Caco-2 (cell line): ENCODE measurements at regions of chr13 and their contacts with region 1.

Region 1: DNA sequence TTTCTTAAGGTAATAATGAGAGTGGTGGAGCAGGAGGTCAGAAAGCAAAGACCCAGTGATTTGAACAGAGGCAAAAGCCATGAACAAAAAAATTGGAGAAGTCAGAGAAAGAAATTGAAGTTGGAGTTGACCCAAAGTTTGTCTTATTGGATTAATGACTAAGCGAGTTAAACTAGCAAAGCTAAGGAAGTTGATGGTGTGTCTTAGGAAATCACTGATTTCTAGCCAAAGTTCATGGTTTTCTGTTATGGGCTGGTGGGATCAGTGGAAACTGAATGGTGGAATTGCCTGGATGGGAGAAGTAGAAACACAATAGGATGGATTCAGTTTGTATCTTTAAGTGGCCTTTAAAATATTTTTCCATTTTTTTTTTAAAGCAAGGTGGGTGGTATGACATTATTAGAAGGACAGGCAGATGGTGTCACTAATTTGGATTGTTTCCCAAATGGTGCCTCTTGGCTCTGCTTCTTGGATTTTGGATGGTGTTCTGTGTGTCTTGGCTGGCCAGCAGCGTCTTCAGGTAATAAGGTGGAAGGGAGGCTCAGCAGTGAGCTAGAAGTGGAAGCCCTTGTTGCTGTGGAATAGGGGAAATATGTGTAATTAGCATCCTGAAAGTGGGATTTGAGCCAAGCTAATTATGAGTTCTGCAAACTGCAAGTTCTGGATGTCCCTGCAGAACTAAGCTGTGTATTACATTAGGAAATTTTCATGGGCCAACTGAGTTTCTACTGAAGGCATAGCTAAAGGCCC is 302.9 kb downstream of the LMO7 start:
- DNase-seq: no peak
- H3K4me3 ChIP-seq: no peak overlapping the region
- H3K4me3 Mint-ChIP-seq: no peak overlapping the region
- H3K27ac Mint-ChIP-seq: no peak overlapping the region
- H3K4me1 ChIP-seq: no peaks in the 10 kb centered on the region
- H3K4me1 Mint-ChIP-seq: no peaks in the 10 kb centered on the region
- H3K27me3 ChIP-seq: no peaks in the 10 kb centered on the region
- H3K27me3 Mint-ChIP-seq: no peaks in the 10 kb centered on the region
- CTCF ChIP-seq: no peak

Region 2: DNA sequence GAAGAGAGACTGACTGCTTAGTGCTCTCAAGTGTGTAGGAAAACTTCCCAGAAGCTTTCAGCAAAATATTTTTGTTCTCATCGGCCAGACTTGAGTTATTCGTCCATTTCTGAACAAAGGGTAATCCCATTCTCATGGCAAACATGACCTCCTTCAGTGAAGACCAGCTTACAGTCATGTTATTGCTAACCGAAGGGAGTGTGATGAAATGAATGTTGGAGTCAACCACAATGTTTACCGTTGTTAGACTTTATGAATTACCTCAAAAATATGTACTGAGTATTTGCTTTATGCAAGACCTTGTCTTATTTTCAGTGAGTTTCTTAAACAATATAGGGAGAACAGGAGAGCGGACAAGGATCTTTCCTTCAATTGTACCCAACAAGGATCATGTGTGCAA is 74.3 kb before region 1 on chr13:
- CTCF ChIA-PET with region 1: no interaction called
- POLR2A ChIA-PET with region 1: interaction called, 12 read pairs
- intact Hi-C with region 1: no loop called
- DNase-seq: no peak
- H3K4me3 ChIP-seq: no peak overlapping the region
- H3K4me3 Mint-ChIP-seq: no peak overlapping the region
- H3K27ac Mint-ChIP-seq: no peak overlapping the region
- H3K4me1 ChIP-seq: 0 out of 2 replicates have a peak, but pooled peaks cover 4% of the 10 kb centered on the region
- H3K4me1 Mint-ChIP-seq: no peaks in the 10 kb centered on the region
- H3K27me3 ChIP-seq: no peaks in the 10 kb centered on the region
- H3K27me3 Mint-ChIP-seq: no peaks in the 10 kb centered on the region
- CTCF ChIP-seq: no peak